Transverse colon (tissue), 4 donors: ENCODE measurements at regions of chr1 and their contacts with region 1.

Region 1: GRCh38 chr1:163935738-163936374 is 614.1 kb downstream of the NUF2 start:
- DNase-seq: no peak
- H3K4me3 ChIP-seq: no peak overlapping the region
- H3K27ac ChIP-seq: no peak overlapping the region
- H3K4me1 ChIP-seq: no peaks in the 10 kb centered on the region
- H3K27me3 ChIP-seq: no peaks in the 10 kb centered on the region
- CTCF ChIP-seq: no peak
- EP300 ChIP-seq: no peak
- POLR2A ChIP-seq: no peak

Region 2: GRCh38 chr1:163824006-163824405 is 111.8 kb before region 1 on chr1:
- in situ Hi-C with region 1: no loop called
- intact Hi-C with region 1: no loop called
- DNase-seq: no peak
- H3K4me3 ChIP-seq: no peak overlapping the region
- H3K27ac ChIP-seq: no peak overlapping the region
- H3K4me1 ChIP-seq: no peaks in the 10 kb centered on the region
- H3K27me3 ChIP-seq: no peaks in the 10 kb centered on the region
- CTCF ChIP-seq: no peak
- EP300 ChIP-seq: no peak
- POLR2A ChIP-seq: no peak

Region 3: GRCh38 chr1:163985700-163986099 is 49.8 kb after region 1 on chr1:
- in situ Hi-C with region 1: no loop called
- intact Hi-C with region 1: loop called (anchors 2 kb)
- DNase-seq: no peak
- H3K4me3 ChIP-seq: no peak overlapping the region
- H3K27ac ChIP-seq: no peak overlapping the region
- H3K4me1 ChIP-seq: no peaks in the 10 kb centered on the region
- H3K27me3 ChIP-seq: no peaks in the 10 kb centered on the region
- CTCF ChIP-seq: no peak
- EP300 ChIP-seq: no peak
- POLR2A ChIP-seq: no peak